ENCODE measurements at regions of chr1 and their contacts with region 1.

Region 1: GRCh38 chr1:109610609-109611307 is 8.7 kb downstream of the GNAT2 start:
- DNase-seq: no peak
- ATAC-seq: no peak
- H3K4me3 ChIP-seq: no peak overlapping the region
- H3K4me3 Mint-ChIP-seq: no peak overlapping the region
- H3K27ac ChIP-seq: no peak overlapping the region
- H3K27ac Mint-ChIP-seq: no peak overlapping the region
- H3K4me1 ChIP-seq: peaks cover 3% of the 10 kb centered on the region
- H3K4me1 Mint-ChIP-seq: peaks cover 3% of the 10 kb centered on the region
- H3K27me3 ChIP-seq: no peaks in the 10 kb centered on the region
- H3K27me3 Mint-ChIP-seq: no peaks in the 10 kb centered on the region
- CTCF ChIP-seq: no peak

Region 2: GRCh38 chr1:109579491-109579890 is 31.3 kb before region 1 on chr1:
- CTCF ChIA-PET with region 1: no interaction called
- POLR2A ChIA-PET with region 1: no interaction called
- intact Hi-C with region 1: loop called in 1 of 2 experiments (anchors 5 kb)
- DNase-seq: no peak
- ATAC-seq: no peak
- H3K4me3 ChIP-seq: no peak overlapping the region
- H3K4me3 Mint-ChIP-seq: no peak overlapping the region
- H3K27ac ChIP-seq: no peak overlapping the region
- H3K27ac Mint-ChIP-seq: no peak overlapping the region
- H3K4me1 ChIP-seq: no peaks in the 10 kb centered on the region
- H3K4me1 Mint-ChIP-seq: no peaks in the 10 kb centered on the region
- H3K27me3 ChIP-seq: no peaks in the 10 kb centered on the region
- H3K27me3 Mint-ChIP-seq: no peaks in the 10 kb centered on the region
- CTCF ChIP-seq: no peak

Region 3: GRCh38 chr1:109655601-109656519 is 45.1 kb after region 1 on chr1 and contains the start of gene GSTM4:
- CTCF ChIA-PET with region 1: no interaction called
- POLR2A ChIA-PET with region 1: no interaction called
- intact Hi-C with region 1: loop called in 1 of 2 experiments (anchors 5 kb)
- DNase-seq: peak; percentile 26 to 75 (median 54)
- ATAC-seq: peak; percentile 83
- H3K4me3 ChIP-seq: peak within 1 kb of the TSS; percentile 99
- H3K4me3 Mint-ChIP-seq: peak within 1 kb of the TSS; percentile 98
- H3K27ac ChIP-seq: peak within 1 kb of the TSS in 1 of 2 donors; percentile 43
- H3K27ac Mint-ChIP-seq: peak within 1 kb of the TSS; percentile 87
- H3K4me1 ChIP-seq: peaks cover 16% of the 10 kb centered on the region
- H3K4me1 Mint-ChIP-seq: peaks cover 41% of the 10 kb centered on the region
- H3K27me3 ChIP-seq: no peaks in the 10 kb centered on the region
- H3K27me3 Mint-ChIP-seq: no peaks in the 10 kb centered on the region
- CTCF ChIP-seq: no peak
- total RNA-seq, gene GSTM4: 17.7 to 20.7 TPM

Region 4: DNA sequence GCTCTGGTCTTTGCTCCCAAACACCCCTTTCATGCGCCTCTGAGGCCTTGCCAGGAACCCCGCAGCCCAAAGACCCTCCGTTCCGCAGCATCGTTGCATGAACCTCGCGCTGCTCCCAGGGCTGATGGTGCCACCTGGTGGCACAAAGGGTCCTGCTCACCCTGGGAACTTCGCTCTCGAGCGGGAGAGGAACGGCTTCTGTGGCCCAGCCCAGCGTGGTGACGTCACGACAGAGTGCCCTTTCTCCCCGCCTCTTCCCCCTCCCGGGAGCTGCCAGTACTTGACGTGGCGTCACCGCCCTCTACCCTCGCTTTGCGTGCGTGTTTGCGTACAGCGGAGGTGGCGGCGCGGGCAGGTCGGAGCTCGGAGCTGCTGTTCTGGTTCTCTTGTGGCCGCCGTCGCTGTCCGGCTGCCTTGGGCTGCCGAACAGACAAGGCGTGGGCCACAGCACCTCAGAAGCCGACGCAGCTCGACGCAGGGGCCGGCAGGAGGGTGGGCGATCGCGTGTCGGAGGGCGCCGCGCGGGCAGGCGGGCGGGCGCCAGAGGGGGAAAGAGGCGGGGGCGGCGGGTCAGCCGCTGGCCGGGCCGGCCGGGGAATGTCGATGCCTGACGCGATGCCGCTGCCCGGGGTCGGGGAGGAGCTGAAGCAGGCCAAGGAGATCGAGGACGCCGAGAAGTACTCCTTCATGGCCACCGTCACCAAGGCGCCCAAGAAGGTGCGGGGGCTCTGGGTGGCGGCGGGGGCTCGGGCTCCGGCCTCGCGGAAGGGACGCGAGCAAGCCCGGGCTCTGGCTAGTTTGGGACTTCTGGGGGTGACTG is 373.9 kb after region 1 on chr1 and contains the start of gene AHCYL1:
- CTCF ChIA-PET with region 1: no interaction called
- POLR2A ChIA-PET with region 1: no interaction called
- intact Hi-C with region 1: no loop called
- DNase-seq: peak; percentile 98 to 100 (median 99)
- ATAC-seq: peak; percentile 99
- H3K4me3 ChIP-seq: peak within 1 kb of the TSS; percentile 90
- H3K4me3 Mint-ChIP-seq: peak within 1 kb of the TSS; percentile 99
- H3K27ac ChIP-seq: peak within 1 kb of the TSS; percentile 71 to 80
- H3K27ac Mint-ChIP-seq: peak within 1 kb of the TSS; percentile 97
- H3K4me1 ChIP-seq: peaks cover 29% of the 10 kb centered on the region
- H3K4me1 Mint-ChIP-seq: peaks cover 51% of the 10 kb centered on the region
- H3K27me3 ChIP-seq: no peaks in the 10 kb centered on the region
- H3K27me3 Mint-ChIP-seq: no peaks in the 10 kb centered on the region
- CTCF ChIP-seq: peak; percentile 92
- total RNA-seq, gene AHCYL1: 6.9 to 8.4 TPM